Mammary epithelial cell (primary cell): ENCODE measurements at regions of chr5 and their contacts with region 1.

Region 1: DNA sequence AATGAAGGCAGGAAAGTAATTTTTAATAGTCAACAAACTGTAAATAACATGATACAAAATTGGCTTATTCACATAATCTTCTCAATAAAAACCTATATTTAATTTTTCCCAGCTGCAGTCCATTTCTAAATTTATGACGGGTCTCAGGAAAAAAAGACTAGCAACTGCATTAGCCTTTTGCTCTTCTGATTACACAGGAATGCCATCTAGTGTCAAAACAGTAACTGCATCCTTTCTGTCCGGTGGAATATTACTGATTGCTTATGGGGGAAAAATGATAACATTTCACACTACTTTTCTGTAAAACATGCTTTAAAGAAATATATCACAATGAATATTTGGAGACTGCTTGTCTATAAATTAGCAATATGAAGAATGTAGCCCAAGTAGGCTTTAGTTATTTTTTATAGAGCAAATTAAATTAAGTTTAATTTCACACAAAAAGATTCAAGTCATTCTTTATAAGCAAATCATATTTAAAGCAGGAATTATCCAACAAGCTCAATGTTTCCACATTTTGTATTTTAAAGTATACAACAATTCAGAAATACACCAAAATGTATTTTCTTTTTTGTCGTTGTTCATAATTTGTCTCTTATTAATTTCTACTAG is 534.7 kb downstream of the CDH10 start:
- DNase-seq: peak; percentile 8
- H3K4me3 ChIP-seq: no peak overlapping the region
- H3K27ac ChIP-seq: no peak overlapping the region
- H3K4me1 ChIP-seq: no peaks in the 10 kb centered on the region
- H3K27me3 ChIP-seq: no peaks in the 10 kb centered on the region
- CTCF ChIP-seq: peak; percentile 86 to 87

Region 2: GRCh38 chr5:23820765-23821471 is 289.2 kb before region 1 on chr5:
- CTCF ChIA-PET with region 1: no interaction called
- dilution Hi-C with region 1: no loop called
- in situ Hi-C with region 1: loop called (anchors 25 kb)
- intact Hi-C with region 1: loop called (anchors 1 kb)
- DNase-seq: peak; percentile 53
- H3K4me3 ChIP-seq: no peak overlapping the region
- H3K27ac ChIP-seq: no peak overlapping the region
- H3K4me1 ChIP-seq: no peaks in the 10 kb centered on the region
- H3K27me3 ChIP-seq: no peaks in the 10 kb centered on the region
- CTCF ChIP-seq: peak; percentile 64 to 69

Region 3: GRCh38 chr5:23840084-23840483 is 270.0 kb before region 1 on chr5:
- CTCF ChIA-PET with region 1: no interaction called
- dilution Hi-C with region 1: no loop called
- in situ Hi-C with region 1: loop called in 1 of 2 experiments (anchors 25 kb)
- intact Hi-C with region 1: no loop called
- DNase-seq: no peak
- H3K4me3 ChIP-seq: no peak overlapping the region
- H3K27ac ChIP-seq: no peak overlapping the region
- H3K4me1 ChIP-seq: no peaks in the 10 kb centered on the region
- H3K27me3 ChIP-seq: no peaks in the 10 kb centered on the region
- CTCF ChIP-seq: peak; percentile 5 to 32

Region 4: DNA sequence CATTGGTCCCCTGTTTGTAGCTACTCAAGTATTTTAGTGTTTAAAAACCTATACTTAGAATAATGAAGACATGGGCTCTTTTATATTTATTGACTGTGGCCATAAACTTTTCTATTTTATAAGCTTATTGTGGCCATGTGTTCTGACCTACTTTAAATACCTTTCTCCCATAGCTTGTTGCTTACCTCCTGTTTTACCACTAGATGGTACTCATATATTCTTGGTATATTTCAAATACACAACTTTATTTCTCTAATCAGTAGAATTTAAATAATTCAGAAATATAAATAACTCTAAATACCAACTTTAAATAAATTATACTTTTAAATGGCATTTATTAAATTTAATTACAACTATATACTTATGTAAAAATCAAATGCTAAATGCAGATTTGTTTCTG is 104.7 kb before region 1 on chr5:
- CTCF ChIA-PET with region 1: no interaction called
- dilution Hi-C with region 1: no loop called
- in situ Hi-C with region 1: loop called (anchors 10 to 25 kb)
- intact Hi-C with region 1: loop called (anchors 1 kb)
- DNase-seq: no peak
- H3K4me3 ChIP-seq: no peak overlapping the region
- H3K27ac ChIP-seq: no peak overlapping the region
- H3K4me1 ChIP-seq: no peaks in the 10 kb centered on the region
- H3K27me3 ChIP-seq: no peaks in the 10 kb centered on the region
- CTCF ChIP-seq: peak; percentile 31 to 53

Region 5: DNA sequence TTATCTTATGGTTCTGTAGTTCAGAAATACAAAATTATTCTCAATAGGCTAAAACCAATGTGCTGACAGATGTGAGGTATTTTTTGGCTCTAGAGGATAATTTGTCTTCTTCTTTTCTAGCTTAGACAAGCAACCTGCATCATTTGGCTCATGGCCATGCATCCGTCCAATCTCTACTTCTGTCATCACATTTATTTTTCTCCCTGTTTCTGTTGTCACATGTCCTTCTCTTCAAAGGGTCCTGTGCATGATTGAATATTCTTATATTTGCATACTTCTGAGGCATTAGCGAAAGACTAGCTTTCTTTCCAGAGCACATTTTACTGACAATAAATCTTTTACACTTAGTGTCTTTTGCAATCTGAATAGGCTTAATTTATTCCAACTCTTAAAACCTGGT is 30.1 kb before region 1 on chr5:
- CTCF ChIA-PET with region 1: no interaction called
- dilution Hi-C with region 1: no loop called
- in situ Hi-C with region 1: no loop called
- intact Hi-C with region 1: no loop called
- DNase-seq: no peak
- H3K4me3 ChIP-seq: no peak overlapping the region
- H3K27ac ChIP-seq: no peak overlapping the region
- H3K4me1 ChIP-seq: no peaks in the 10 kb centered on the region
- H3K27me3 ChIP-seq: no peaks in the 10 kb centered on the region
- CTCF ChIP-seq: no peak